ENCODE measurements at regions of chr10 and their contacts with region 1.

Region 1: GRCh38 chr10:30392564-30392990 is 41.4 kb upstream of the MAP3K8 start:
- DNase-seq: peak; percentile 88
- CTCF ChIP-seq: peak; percentile 82

Region 2: DNA sequence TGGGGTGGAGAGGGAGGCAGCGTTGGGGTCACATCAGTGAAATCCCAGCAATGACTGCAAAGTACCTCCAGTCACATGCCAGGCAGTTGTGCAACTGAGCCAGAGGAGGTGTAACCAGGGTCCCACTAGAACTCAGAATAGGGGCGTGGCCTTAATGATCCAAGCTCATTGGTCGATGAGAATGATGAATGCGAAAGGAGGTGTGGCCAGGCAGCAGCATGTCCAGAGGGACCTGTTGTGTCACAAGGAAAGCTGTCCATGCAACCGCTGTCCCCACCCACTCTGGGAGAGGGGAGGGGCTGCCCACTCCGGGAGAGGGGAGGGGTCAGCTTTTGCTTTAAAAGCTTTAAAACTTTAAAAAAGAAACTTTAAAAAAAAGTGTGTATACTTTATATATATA is 18.2 kb before region 1 on chr10:
- CTCF ChIA-PET with region 1: interaction called, 15 read pairs
- POLR2A ChIA-PET with region 1: no interaction called
- DNase-seq: no peak
- CTCF ChIP-seq: no peak

Region 3: GRCh38 chr10:30413996-30414576 is 21.5 kb after region 1 on chr10:
- CTCF ChIA-PET with region 1: interaction called, 12 read pairs
- POLR2A ChIA-PET with region 1: no interaction called
- DNase-seq: peak; percentile 70
- CTCF ChIP-seq: peak; percentile 85

Region 4: DNA sequence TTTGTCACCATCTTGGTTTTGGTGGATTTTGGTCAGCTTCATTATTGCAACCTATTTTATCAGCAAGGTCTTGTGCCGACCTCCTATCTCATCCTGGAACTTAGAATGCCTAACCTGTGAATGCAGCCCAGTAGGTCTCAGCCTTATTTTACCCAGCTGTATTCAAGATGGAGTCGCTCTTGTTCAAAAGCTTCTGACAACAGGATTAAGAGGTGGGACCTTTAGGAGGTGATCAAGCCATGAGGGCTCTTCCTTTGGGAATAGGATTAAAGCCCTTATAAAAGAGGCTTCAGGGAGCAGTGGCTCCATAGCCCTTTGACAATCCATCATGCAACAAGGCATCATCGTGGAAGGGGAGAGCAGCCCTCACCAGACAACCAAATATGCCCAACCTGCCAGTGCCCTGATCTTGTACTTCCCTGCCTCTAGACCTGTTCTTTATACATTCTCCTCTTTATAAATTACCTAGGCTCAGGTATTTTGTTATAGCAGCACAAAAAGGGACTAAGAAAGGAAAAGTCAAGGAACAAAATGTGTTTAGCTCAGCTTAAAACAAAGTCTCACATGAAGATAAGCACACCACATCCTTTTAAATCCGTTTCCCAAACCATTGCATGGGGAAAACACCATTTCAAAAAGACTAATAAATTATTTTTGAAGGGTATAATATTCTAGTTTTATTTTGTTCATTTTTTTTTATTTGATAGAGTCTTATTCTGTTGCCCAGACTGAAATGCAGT is 32.9 kb after region 1 on chr10:
- CTCF ChIA-PET with region 1: no interaction called
- POLR2A ChIA-PET with region 1: no interaction called
- DNase-seq: no peak
- CTCF ChIP-seq: no peak

Region 5: DNA sequence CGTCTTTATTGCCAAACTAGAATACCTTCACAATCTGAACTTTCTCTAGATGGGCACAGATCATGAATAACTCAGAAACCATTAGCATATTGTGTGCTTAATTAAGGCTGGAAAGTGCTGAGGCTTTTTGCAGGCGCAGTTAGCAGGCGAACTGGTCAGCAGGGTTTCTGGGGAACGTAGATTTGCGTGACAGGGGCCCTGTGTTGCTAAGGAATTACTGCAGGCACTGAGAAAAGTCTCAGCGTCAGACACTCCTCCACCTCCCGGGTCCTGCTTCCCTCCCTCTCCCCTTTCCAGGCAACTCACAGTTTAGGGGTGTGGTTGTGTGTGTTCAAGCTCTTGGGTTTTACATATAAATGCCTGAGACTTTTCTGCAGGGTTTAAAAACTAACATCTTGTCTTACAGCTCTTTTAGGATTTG is 43.6 kb after region 1 on chr10:
- CTCF ChIA-PET with region 1: no interaction called
- POLR2A ChIA-PET with region 1: no interaction called
- DNase-seq: no peak
- CTCF ChIP-seq: no peak

Region 6: DNA sequence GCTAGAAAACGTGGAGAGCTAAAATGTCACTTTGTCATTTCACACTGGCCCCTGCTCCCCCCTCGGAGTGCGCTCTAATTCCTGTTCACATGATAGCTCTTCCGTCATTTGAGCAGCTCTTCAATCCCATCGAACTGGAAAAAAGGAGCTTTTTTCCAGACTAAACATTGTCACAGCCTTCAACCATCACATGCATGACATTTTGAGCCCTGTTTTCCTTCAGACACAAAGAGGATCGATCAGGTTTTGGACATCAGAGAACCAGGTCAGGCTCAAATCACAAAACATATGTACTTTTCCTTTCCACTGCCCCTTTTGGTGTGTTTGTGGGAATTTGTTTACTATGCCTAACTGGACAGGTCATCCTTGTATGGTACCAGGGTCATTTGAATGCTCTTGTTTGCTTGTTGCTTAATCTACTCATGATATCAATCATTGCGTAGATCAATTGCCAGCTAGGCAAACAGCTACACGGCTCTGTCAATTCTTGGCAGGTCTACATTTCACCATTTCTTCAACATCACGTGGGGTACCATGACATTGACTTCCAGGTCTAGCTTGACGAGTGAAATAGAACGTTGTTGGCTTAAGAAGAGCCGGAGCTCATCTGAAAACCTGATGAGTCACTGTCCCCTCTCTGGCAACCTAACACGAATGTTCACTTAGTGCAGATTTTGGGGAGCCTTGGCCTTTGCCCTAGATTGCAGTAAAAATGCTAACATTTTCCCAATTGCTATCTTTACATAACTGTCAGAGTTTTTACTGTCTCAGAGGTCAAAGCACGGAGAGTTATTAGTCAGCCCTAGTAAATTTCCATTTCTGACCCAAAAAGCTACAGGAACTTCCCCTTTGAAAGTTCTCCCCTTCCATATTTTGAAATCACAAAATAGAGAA is 149.7 kb after region 1 on chr10:
- CTCF ChIA-PET with region 1: interaction called, 19 read pairs
- POLR2A ChIA-PET with region 1: no interaction called
- DNase-seq: peak; percentile 42
- CTCF ChIP-seq: no peak

Region 7: GRCh38 chr10:30600005-30600404 is 207.4 kb after region 1 on chr10:
- CTCF ChIA-PET with region 1: no interaction called
- POLR2A ChIA-PET with region 1: no interaction called
- DNase-seq: no peak
- CTCF ChIP-seq: no peak

Measured in GM10248 (cell line).